CD8-positive, alpha-beta memory T cell (primary cell): ENCODE measurements at regions of chr5 and their contacts with region 1.

Region 1: DNA sequence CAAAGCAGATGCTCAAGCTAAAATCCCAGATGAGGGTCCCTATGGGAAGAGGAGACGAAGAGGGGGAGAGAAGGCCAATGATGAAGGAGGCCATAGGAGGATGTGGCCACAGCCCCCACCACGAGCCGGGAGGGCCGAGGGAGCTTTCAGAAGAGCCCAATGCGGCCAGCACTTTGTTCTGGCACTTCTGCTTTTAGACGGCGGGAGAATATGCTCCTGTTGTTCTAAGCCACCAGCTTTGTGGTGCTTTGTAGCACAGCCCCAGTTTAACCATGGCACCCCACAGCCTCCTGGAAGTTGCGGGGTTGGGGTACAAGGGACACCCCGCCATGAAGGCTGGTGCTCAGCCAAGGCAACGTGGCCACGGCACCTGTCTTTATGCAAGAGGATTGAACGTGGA is 33.4 kb downstream of the LPCAT1 start:
- DNase-seq: no peak
- H3K4me3 ChIP-seq: no peak overlapping the region
- H3K4me3 Mint-ChIP-seq: peak overlapping the region in 1 of 7 donors; percentile 27
- H3K27ac ChIP-seq: no peak overlapping the region
- H3K27ac Mint-ChIP-seq: peak overlapping the region in 7 of 8 donors; percentile 19 to 93 (median 73)
- H3K4me1 ChIP-seq: peaks cover 17% of the 10 kb centered on the region
- H3K4me1 Mint-ChIP-seq: peaks cover 48 to 77% (median 65%) of the 10 kb centered on the region in 3 donors
- H3K27me3 ChIP-seq: no peaks in the 10 kb centered on the region
- H3K27me3 Mint-ChIP-seq: no peaks in the 10 kb centered on the region

Region 2: DNA sequence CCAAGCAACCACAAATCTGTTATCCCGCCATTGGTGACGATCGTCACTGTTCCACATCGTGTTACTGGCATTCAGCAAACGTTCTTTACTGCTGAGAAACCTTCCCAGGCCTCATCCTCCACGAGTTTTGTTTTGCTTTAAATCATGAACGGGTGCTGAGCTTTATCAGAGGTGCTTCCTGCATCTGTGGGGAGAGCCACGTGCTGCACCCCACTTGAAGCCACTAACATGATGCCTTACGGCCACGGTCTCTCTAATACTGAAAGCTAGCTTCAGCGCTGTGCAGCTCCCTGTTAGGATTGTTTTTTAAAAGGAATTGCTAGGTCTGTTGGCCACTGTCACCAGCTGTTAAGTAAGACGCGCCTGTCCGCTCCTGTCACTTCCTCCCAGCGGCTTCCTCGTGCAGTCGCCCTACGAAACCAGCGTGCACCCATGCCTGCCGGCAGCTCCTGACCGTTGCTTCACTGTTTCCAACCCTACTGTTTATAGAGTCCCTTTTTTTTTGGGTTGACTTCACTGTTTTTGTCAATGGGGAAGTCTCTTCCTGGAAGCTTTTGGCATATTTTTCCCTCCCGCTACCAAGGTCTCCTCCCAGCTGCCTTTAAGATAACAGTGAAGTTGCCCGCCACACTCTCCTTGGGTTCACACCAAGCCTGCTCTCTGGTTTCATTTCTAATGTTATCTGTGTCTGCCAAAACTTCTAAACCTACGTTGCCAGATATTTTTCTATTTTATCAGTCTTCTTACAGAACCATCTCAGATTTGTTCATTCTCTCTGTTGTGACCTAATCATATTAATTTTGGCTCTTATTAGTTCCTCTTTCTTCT is 13.1 kb after region 1 on chr5:
- CTCF ChIA-PET with region 1: interaction called, 10 read pairs
- POLR2A ChIA-PET with region 1: interaction called, 6 read pairs
- DNase-seq: peak in 2 of 5 donors; percentile 27 to 34
- H3K4me3 ChIP-seq: no peak overlapping the region
- H3K4me3 Mint-ChIP-seq: peak overlapping the region; percentile 46 to 91 (median 72)
- H3K27ac ChIP-seq: peak overlapping the region; percentile 17
- H3K27ac Mint-ChIP-seq: peak overlapping the region; percentile 81 to 98 (median 90)
- H3K4me1 ChIP-seq: peaks cover 46% of the 10 kb centered on the region
- H3K4me1 Mint-ChIP-seq: peaks cover 63 to 90% (median 69%) of the 10 kb centered on the region in 3 donors
- H3K27me3 ChIP-seq: no peaks in the 10 kb centered on the region
- H3K27me3 Mint-ChIP-seq: peaks cover 0 to 3% of the 10 kb centered on the region in 2 donors